Gastrocnemius medialis (tissue), 4 donors: ENCODE measurements at regions of chr5 and their contacts with region 1.

Region 1: DNA sequence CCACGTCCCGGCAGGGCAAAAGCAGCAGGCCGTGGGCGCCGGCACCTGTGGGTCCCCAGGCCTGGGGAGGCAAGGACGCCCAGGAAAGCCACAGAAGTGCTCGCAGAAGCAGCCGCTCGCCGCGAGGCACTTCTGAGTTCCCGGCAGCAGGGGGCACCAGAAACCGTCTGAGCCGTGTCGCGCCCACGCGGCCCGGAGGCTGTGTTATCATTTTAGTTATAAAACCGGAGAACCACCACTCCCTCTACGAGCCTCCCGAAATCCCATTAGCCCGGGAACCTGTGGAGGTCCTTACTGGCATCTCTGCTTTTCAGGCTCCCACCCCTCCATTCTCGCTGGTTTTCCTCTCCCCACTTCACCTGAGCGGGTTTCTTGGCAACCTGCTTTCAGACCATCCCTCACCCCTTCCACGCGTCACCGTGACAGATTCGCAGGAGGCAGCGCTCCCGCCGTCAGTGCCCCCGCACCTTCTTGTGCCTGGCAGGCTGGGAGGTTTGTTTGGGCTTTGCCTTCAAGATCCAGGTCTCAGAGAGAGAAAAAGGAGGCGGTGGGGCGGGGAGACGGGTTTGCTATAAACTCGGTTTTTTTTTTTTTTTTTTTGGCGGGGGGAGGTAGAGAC is 2.3 kb downstream of the GDNF start:
- DNase-seq: peak; percentile 49 to 68
- ATAC-seq: peak; percentile 36 to 57
- H3K4me3 ChIP-seq: peak overlapping the region; percentile 64 to 73 (median 70)
- H3K27ac ChIP-seq: peak overlapping the region; percentile 66 to 95 (median 86)
- H3K4me1 ChIP-seq: peaks cover 22 to 49% of the 10 kb centered on the region in 2 donors
- H3K27me3 ChIP-seq: peaks cover 0 to 70% (median 7%) of the 10 kb centered on the region in 3 donors
- CTCF ChIP-seq: peak; percentile 79 to 92 (median 88)
- POLR2A ChIP-seq: no peak

Region 2: DNA sequence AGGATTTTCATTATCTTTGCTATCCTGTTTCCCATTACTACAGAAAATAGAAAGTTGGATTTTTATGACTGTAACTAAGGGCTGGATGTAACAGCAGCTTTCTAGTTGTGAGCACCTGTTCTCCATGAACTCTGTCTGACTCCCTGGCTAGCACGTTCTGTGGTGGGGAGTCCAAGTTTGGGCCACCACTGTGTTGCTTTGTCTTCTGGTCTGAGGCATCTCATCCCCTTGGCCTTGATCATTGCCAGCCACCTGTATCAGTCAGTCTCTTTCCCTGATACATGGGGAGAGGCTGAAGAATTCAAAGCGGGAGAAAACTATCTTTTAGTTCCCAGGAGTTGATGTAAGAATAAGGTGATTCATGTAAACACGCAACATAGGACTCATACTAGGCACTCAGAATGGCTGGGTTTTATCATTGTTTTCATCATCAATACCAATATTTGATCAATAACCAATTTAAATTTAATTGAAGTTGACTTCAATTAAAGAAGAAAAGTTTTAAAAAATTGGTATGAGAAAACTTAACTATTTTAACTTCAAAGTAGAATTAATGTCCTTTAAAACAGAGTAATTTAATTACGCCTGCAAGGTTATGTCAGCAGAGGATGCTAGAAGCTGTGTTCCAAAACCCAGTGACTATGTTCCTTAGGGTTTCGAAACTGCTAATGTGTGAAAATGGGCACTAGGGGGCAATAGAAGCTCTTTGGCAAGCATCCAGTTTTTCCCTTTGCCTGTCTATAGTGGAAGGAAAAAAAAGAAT is 424.8 kb before region 1 on chr5:
- in situ Hi-C with region 1: no loop called
- intact Hi-C with region 1: loop called (anchors 2 kb)
- DNase-seq: peak; percentile 13 to 61
- ATAC-seq: peak; percentile 92 to 100
- H3K4me3 ChIP-seq: no peak overlapping the region
- H3K27ac ChIP-seq: no peak overlapping the region
- H3K4me1 ChIP-seq: no peaks in the 10 kb centered on the region
- H3K27me3 ChIP-seq: no peaks in the 10 kb centered on the region
- CTCF ChIP-seq: peak; percentile 63 to 95 (median 70)
- POLR2A ChIP-seq: no peak

Region 3: GRCh38 chr5:37668524-37669047 is 168.9 kb before region 1 on chr5:
- in situ Hi-C with region 1: no loop called
- intact Hi-C with region 1: loop called (anchors 5 kb)
- DNase-seq: peak; percentile 93 to 94
- ATAC-seq: peak; percentile 95
- H3K4me3 ChIP-seq: no peak overlapping the region
- H3K27ac ChIP-seq: peak overlapping the region; percentile 78 to 89 (median 84)
- H3K4me1 ChIP-seq: peaks cover 52 to 60% of the 10 kb centered on the region in 2 donors
- H3K27me3 ChIP-seq: no peaks in the 10 kb centered on the region
- CTCF ChIP-seq: no peak
- POLR2A ChIP-seq: no peak

Region 4: GRCh38 chr5:37722236-37723146 is 115.0 kb before region 1 on chr5:
- in situ Hi-C with region 1: no loop called
- intact Hi-C with region 1: loop called (anchors 2 kb)
- DNase-seq: no peak
- ATAC-seq: no peak
- H3K4me3 ChIP-seq: no peak overlapping the region
- H3K27ac ChIP-seq: peak overlapping the region in 3 of 4 donors; percentile 63 to 79 (median 73)
- H3K4me1 ChIP-seq: peaks cover 10 to 24% of the 10 kb centered on the region in 2 donors
- H3K27me3 ChIP-seq: no peaks in the 10 kb centered on the region
- CTCF ChIP-seq: no peak
- POLR2A ChIP-seq: no peak

Region 5: GRCh38 chr5:37786862-37787519 is 50.5 kb before region 1 on chr5:
- in situ Hi-C with region 1: no loop called
- intact Hi-C with region 1: no loop called
- DNase-seq: no peak
- ATAC-seq: no peak
- H3K4me3 ChIP-seq: no peak overlapping the region
- H3K27ac ChIP-seq: no peak overlapping the region
- H3K4me1 ChIP-seq: no peaks in the 10 kb centered on the region
- H3K27me3 ChIP-seq: no peaks in the 10 kb centered on the region
- CTCF ChIP-seq: no peak
- POLR2A ChIP-seq: no peak

Region 6: DNA sequence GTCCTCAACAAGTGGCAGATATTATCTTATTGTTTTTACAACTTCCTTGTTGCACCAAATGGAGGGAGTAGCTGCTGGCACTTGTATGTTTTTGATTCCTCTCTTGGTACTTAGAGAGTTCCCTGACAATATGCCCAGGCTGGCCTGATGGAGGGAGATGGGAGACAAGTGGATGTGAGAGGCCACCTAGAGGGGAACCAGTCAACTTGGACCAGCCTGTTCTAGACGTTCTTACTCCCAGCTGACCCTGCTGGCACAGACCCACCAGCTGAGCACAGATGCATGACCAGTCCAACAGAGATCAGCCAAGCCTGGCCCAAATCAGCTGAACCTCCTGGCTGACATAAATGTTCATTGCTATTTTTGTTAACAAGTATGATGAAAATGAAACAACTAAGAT is 63.2 kb after region 1 on chr5:
- in situ Hi-C with region 1: no loop called
- intact Hi-C with region 1: loop called (anchors 1 kb)
- DNase-seq: peak; percentile 37 to 69
- ATAC-seq: peak; percentile 87
- H3K4me3 ChIP-seq: no peak overlapping the region
- H3K27ac ChIP-seq: no peak overlapping the region
- H3K4me1 ChIP-seq: no peaks in the 10 kb centered on the region
- H3K27me3 ChIP-seq: no peaks in the 10 kb centered on the region
- CTCF ChIP-seq: peak in 1 of 5 experiments; percentile 26
- POLR2A ChIP-seq: no peak

Region 7: GRCh38 chr5:38193015-38193581 is 355.6 kb after region 1 on chr5:
- in situ Hi-C with region 1: loop called (anchors 5 to 10 kb)
- intact Hi-C with region 1: loop called (anchors 1 kb)
- DNase-seq: peak; percentile 44 to 63
- ATAC-seq: peak; percentile 78 to 85
- H3K4me3 ChIP-seq: no peak overlapping the region
- H3K27ac ChIP-seq: no peak overlapping the region
- H3K4me1 ChIP-seq: peaks cover 6% of the 10 kb centered on the region in 2 donors
- H3K27me3 ChIP-seq: peaks cover 0 to 11% (median 0%) of the 10 kb centered on the region in 3 donors
- CTCF ChIP-seq: peak; percentile 79 to 88 (median 84)
- POLR2A ChIP-seq: no peak

Region 8: DNA sequence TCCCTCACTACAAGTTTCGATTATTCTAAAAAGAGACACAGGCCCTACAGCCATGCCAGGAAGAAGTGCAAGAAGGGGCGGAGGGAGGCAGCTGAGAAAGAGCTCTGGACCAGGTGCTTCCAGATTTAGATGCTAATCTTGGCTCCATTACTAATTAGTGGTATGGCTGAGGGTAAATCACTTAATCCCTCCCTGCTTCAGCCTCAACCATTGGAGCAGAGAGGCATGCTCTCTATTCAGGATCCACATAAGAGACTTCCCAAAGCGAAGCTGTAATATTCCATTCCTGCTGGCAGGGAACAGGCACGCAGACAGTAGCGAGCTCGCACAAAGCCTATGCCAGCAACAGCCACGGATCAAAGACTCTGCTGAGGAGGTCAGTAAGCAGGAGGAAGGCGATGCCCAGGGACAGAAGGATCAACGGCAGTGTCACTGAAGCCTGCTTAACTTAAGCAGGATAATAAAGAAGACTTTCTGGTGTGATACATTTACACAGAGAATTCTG is 694.7 kb after region 1 on chr5:
- in situ Hi-C with region 1: no loop called
- intact Hi-C with region 1: loop called (anchors 5 kb)
- DNase-seq: no peak
- ATAC-seq: peak; percentile 28 to 56
- H3K4me3 ChIP-seq: peak overlapping the region in 1 of 4 donors; percentile 18
- H3K27ac ChIP-seq: peak overlapping the region; percentile 78 to 87 (median 85)
- H3K4me1 ChIP-seq: peaks cover 60 to 73% of the 10 kb centered on the region in 2 donors
- H3K27me3 ChIP-seq: no peaks in the 10 kb centered on the region
- CTCF ChIP-seq: no peak
- POLR2A ChIP-seq: no peak